Activated CD8-positive, alpha-beta T cell treated with anti-CD3 and anti-CD28 coated beads for 36 hours (primary cell): ENCODE measurements at regions of chr9 and their contacts with region 1.

Region 1: GRCh38 chr9:137176302-137177182 is 4.7 kb upstream of the TMEM210 start:
- DNase-seq: no peak
- ATAC-seq: peak; percentile 52
- H3K4me3 Mint-ChIP-seq: no peak overlapping the region
- H3K27ac Mint-ChIP-seq: no peak overlapping the region
- H3K4me1 Mint-ChIP-seq: peaks cover 5% of the 10 kb centered on the region
- H3K27me3 Mint-ChIP-seq: peaks cover 3% of the 10 kb centered on the region
- CTCF ChIP-seq: peak; percentile 56

Region 2: DNA sequence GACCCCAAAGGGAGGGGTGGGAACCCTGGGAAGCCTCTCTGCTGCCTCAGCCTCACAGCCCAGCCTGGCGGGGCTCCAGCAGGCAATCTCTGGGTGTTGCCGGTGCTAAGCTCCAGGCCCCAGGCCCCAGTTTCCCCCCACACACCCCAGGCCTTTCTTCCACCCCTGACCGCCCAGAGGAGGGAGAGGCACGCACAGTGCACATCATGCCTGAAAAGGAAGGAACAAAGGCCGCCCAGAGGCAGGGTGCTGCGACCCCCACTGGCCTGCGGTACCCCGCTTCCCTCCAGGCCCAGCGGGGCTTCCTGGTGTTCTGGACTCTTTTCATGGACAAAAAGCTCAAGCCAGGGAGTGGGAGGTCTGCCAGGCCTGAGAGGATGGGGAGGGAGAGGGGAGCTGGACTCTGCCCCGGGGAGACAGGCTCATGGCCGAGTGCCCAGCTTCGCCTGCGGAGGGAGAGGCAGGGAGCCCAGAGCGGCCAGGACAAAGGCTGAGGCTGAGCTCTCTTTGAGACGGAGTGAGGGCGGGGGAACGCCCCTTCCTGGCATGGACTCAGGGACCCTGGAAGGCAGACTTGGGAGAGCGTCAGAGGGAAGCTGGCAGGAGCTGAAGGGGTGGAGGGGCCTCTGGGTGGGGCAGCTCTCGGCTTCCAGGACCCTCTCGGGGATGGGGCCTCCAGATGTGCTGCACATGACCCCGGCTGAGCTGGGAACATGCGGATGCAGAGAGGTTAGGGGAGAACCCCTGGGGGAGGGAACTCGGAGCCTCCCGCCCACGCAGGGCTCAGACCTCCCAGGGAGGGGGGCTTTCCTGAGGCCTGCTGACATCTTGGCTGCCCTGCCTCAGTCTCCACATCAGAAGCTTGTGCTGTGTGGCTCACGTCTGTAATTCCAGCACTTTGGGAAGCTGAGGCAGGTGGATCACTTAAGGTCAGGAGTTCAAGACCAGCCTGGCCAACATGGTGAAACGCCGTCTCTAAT is 120.9 kb before region 1 on chr9:
- CTCF ChIA-PET with region 1: no interaction called
- POLR2A ChIA-PET with region 1: no interaction called
- intact Hi-C with region 1: no loop called
- DNase-seq: no peak
- ATAC-seq: no peak
- H3K4me3 Mint-ChIP-seq: no peak overlapping the region
- H3K27ac Mint-ChIP-seq: no peak overlapping the region
- H3K4me1 Mint-ChIP-seq: no peaks in the 10 kb centered on the region
- H3K27me3 Mint-ChIP-seq: peaks cover 7% of the 10 kb centered on the region
- CTCF ChIP-seq: no peak

Region 3: DNA sequence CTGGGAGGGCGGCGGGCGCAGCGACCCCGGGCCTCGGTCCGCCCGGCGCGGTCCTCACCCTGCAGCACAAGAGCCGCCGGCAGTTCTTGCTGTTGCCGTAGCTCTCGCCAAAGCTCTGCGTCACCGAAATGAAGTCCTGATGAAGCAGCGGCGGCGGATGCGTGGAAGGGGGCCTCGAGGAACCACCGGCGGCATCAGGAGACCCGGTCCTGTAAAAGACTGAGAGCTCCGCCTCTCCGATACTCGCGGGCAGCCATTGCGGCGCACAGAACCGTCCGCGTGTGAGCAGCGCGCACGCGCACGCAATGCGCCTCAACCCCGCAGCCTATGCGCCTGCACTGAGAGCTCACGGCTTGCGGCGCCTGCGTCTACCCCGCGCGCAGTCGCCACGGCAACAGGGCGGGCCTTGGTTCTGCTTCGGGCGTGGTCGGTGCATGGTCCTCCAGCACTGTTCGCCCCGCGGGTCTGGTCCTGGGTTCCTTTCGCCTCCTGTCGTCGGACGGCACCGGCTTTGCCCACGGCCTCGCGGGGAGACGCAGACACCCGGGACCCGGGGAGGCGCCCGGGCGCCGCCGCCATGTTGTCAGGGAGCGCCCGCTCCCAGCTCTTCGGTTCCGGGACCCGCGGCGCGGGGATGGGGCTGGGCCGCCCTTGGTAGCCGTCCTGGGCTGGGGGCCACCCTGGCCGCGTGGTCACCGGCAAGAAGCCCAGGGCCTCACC is 46.9 kb before region 1 on chr9:
- CTCF ChIA-PET with region 1: no interaction called
- POLR2A ChIA-PET with region 1: interaction called, 3 read pairs
- intact Hi-C with region 1: loop called (anchors 10 kb)
- DNase-seq: peak; percentile 91
- ATAC-seq: peak; percentile 96
- H3K4me3 Mint-ChIP-seq: peak overlapping the region; percentile 87
- H3K27ac Mint-ChIP-seq: peak overlapping the region; percentile 68
- H3K4me1 Mint-ChIP-seq: peaks cover 17% of the 10 kb centered on the region
- H3K27me3 Mint-ChIP-seq: peaks cover 4% of the 10 kb centered on the region
- CTCF ChIP-seq: no peak

Region 4: DNA sequence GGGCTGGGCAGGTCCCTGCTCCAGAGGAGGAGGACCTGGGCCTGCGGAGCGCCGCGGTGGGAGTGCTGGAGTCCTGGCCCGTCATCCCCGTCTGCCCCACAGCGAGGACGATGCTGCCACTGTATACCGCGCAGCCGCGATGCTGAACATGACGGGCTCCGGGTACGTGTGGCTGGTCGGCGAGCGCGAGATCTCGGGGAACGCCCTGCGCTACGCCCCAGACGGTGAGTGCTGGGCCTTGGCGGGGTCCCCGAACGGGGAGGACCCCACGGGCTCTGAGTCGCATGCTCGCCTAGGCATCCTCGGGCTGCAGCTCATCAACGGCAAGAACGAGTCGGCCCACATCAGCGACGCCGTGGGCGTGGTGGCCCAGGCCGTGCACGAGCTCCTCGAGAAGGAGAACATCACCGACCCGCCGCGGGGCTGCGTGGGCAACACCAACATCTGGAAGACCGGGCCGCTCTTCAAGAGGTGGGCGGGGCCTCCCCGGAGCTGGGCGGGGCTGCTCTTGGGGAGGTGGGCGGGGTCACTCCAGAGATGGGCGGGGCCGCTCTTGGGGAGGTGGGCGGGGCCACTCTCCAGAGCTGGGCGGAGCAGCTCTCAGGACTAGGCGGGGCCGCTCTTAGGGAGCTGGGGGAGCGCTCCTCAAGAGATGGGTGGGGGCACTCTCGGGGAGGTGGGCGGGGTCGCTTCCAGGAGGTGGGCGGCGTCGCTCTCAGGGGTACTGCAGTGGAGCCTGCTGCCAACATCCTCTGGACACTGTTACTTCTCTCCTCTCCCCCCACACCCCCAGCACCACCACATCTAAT is 19.8 kb before region 1 on chr9:
- CTCF ChIA-PET with region 1: interaction called, 4 read pairs
- POLR2A ChIA-PET with region 1: interaction called, 11 read pairs
- intact Hi-C with region 1: no loop called
- DNase-seq: peak; percentile 79
- ATAC-seq: peak; percentile 84
- H3K4me3 Mint-ChIP-seq: peak overlapping the region; percentile 52
- H3K27ac Mint-ChIP-seq: no peak overlapping the region
- H3K4me1 Mint-ChIP-seq: peaks cover 18% of the 10 kb centered on the region
- H3K27me3 Mint-ChIP-seq: peaks cover 37% of the 10 kb centered on the region
- CTCF ChIP-seq: no peak

Region 5: GRCh38 chr9:137188490-137189296 is 12.2 kb after region 1 on chr9 and contains the starts of genes ANAPC2 and SSNA1:
- CTCF ChIA-PET with region 1: interaction called, 6 read pairs
- POLR2A ChIA-PET with region 1: interaction called, 28 read pairs
- intact Hi-C with region 1: no loop called
- DNase-seq: peak; percentile 92
- ATAC-seq: peak; percentile 84
- H3K4me3 Mint-ChIP-seq: peak within 1 kb of the TSS; percentile 91
- H3K27ac Mint-ChIP-seq: peak within 1 kb of the TSS; percentile 94
- H3K4me1 Mint-ChIP-seq: peaks cover 32% of the 10 kb centered on the region
- H3K27me3 Mint-ChIP-seq: no peaks in the 10 kb centered on the region
- CTCF ChIP-seq: peak; percentile 53
- total RNA-seq, gene ANAPC2: 38.6 to 39.6 TPM
- total RNA-seq, gene SSNA1: 53.3 to 58.4 TPM